Transverse colon (tissue), 4 donors: ENCODE measurements at regions of chrX and their contacts with region 1.

Region 1: DNA sequence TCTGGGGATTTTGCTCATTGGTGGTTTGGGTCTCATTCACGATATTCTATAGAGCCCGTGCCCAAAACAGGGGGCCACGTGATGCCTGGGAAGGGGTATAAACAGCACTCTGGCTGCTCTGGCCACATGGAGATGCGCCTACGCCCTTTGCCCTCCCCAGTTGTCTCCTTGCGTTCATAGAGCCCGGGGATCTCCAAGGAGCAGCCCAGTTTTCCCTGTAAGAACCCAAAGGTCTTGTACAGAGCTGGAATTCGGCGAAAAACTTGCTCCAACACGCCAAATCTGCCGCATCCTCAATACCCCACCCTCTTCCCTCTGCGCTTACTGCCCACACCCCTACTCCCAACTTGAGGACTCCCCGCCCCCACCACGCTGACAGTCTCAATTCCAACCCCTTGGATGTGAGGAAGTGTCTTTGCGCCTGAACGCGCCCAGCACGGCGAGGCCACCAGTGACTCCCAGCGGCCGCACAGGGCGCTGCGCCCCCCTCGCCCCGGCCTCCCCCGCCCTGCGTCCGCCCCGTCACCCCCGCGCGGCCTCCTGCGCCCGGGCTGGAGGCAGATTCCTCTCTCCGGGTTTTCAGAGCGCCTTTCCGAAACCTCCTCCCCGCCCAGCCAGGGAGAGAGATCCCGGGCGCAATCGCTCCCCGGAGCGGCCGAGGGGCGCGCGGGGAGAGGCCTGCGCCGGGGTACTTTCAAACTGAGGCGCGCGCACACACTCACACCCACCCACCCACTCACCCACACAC is at the start of gene NHS:
- DNase-seq: peak; percentile 75
- H3K4me3 ChIP-seq: peak within 1 kb of the TSS; percentile 40 to 71 (median 48)
- H3K27ac ChIP-seq: peak within 1 kb of the TSS; percentile 69 to 83 (median 78)
- H3K4me1 ChIP-seq: peaks cover 0 to 8% (median 3%) of the 10 kb centered on the region in 4 donors
- H3K27me3 ChIP-seq: no peaks in the 10 kb centered on the region
- CTCF ChIP-seq: peak in 4 of 5 experiments; percentile 41 to 56 (median 43)
- EP300 ChIP-seq: no peak
- POLR2A ChIP-seq: no peak
- total RNA-seq, gene NHS: 1.2 to 10.7 (median 5.0) TPM

Region 2: GRCh38 chrX:16970977-16971376 is 403.8 kb before region 1 on chrX:
- in situ Hi-C with region 1: no loop called
- intact Hi-C with region 1: no loop called
- DNase-seq: no peak
- H3K4me3 ChIP-seq: no peak overlapping the region
- H3K27ac ChIP-seq: no peak overlapping the region
- H3K4me1 ChIP-seq: no peaks in the 10 kb centered on the region
- H3K27me3 ChIP-seq: no peaks in the 10 kb centered on the region
- CTCF ChIP-seq: no peak
- EP300 ChIP-seq: no peak
- POLR2A ChIP-seq: no peak

Region 3: GRCh38 chrX:17242470-17242869 is 132.3 kb before region 1 on chrX:
- in situ Hi-C with region 1: loop called in 1 of 4 experiments (anchors 25 kb)
- intact Hi-C with region 1: loop called (anchors 10 kb)
- DNase-seq: peak; percentile 28
- H3K4me3 ChIP-seq: no peak overlapping the region
- H3K27ac ChIP-seq: no peak overlapping the region
- H3K4me1 ChIP-seq: no peaks in the 10 kb centered on the region
- H3K27me3 ChIP-seq: no peaks in the 10 kb centered on the region
- CTCF ChIP-seq: peak; percentile 65 to 83 (median 66)
- EP300 ChIP-seq: no peak
- POLR2A ChIP-seq: no peak

Region 4: GRCh38 chrX:17361620-17362019 is 13.2 kb before region 1 on chrX:
- in situ Hi-C with region 1: no loop called
- intact Hi-C with region 1: no loop called
- DNase-seq: no peak
- H3K4me3 ChIP-seq: no peak overlapping the region
- H3K27ac ChIP-seq: no peak overlapping the region
- H3K4me1 ChIP-seq: no peaks in the 10 kb centered on the region
- H3K27me3 ChIP-seq: no peaks in the 10 kb centered on the region
- CTCF ChIP-seq: peak in 3 of 5 experiments; percentile 15 to 21 (median 20)
- EP300 ChIP-seq: no peak
- POLR2A ChIP-seq: no peak

Region 5: GRCh38 chrX:17397074-17397473 is 22.3 kb after region 1 on chrX:
- in situ Hi-C with region 1: no loop called
- intact Hi-C with region 1: no loop called
- DNase-seq: no peak
- H3K4me3 ChIP-seq: no peak overlapping the region
- H3K27ac ChIP-seq: no peak overlapping the region
- H3K4me1 ChIP-seq: no peaks in the 10 kb centered on the region
- H3K27me3 ChIP-seq: no peaks in the 10 kb centered on the region
- CTCF ChIP-seq: no peak
- EP300 ChIP-seq: no peak
- POLR2A ChIP-seq: no peak

Region 6: DNA sequence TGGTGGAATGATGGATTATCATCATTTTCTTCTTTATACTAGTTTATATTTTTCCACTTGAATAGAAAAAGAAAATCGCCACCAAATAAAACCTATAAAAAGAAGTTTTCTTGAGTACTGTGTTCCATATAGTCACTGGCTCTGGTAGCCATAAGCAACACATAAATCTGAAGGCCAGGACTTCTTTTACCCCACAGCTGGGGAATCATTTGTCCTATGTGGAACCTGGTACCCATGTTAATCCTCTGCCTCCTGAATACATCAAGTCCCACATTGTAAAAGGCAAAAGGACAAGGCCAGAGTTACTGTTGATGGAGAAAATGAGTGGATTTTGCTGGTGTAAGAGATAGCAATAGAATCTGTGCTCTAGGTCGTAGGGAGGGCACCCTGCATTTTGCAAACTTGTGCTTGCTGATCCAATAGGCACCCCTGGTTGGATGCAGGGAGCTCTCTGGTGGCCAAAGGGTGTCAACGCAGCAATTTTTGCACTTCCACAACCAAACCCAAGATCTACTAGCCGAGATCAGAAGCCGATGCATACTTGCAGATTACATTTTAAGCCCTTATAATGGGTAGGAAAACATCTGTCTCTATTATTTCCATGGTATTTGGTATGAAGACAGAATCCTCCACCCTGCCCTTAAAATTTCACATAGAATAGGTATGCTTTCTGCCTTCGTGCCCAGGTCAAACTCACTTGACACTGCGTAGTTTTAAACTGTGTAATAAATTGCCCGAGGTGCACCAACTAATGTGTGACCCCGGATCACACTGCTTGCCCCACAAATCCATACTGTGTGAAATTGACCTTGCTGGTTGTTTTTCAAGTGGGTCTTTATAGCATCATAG is 216.3 kb after region 1 on chrX:
- in situ Hi-C with region 1: no loop called
- intact Hi-C with region 1: loop called (anchors 5 kb)
- DNase-seq: peak; percentile 59
- H3K4me3 ChIP-seq: no peak overlapping the region
- H3K27ac ChIP-seq: peak overlapping the region; percentile 28 to 69 (median 54)
- H3K4me1 ChIP-seq: peaks cover 0 to 11% (median 3%) of the 10 kb centered on the region in 4 donors
- H3K27me3 ChIP-seq: no peaks in the 10 kb centered on the region
- CTCF ChIP-seq: peak; percentile 54 to 61 (median 58)
- EP300 ChIP-seq: no peak
- POLR2A ChIP-seq: no peak

Region 7: DNA sequence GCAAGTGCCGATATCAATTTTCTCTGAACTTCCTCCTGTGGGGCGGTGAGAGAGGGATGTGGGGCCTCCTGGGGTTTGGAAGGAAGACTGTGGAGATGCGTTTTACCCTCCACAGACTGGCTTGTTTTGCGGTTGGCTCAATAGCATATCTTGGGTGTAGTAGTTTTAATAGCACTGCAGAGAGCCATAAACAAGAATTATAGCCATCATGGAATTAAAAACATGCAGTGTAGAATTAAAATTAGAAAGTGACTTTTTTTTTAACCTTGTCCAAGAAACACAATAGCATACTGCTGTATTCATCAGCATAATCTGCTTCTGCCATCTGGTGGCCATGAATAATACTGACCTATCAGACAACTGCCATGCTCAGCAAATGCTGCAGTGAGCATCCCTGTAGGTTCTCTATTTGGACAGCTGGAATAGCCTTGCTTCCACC is 315.2 kb after region 1 on chrX:
- in situ Hi-C with region 1: no loop called
- intact Hi-C with region 1: loop called (anchors 10 kb)
- DNase-seq: peak; percentile 41
- H3K4me3 ChIP-seq: no peak overlapping the region
- H3K27ac ChIP-seq: peak overlapping the region in 1 of 4 donors; percentile 37
- H3K4me1 ChIP-seq: peaks cover 0 to 3% (median 0%) of the 10 kb centered on the region in 4 donors
- H3K27me3 ChIP-seq: no peaks in the 10 kb centered on the region
- CTCF ChIP-seq: peak; percentile 52 to 65 (median 62)
- EP300 ChIP-seq: no peak
- POLR2A ChIP-seq: no peak